Activated CD8-positive, alpha-beta T cell treated with anti-CD3 and anti-CD28 coated beads for 36 hours (primary cell): ENCODE measurements at regions of chr22 and their contacts with region 1.

Region 1: GRCh38 chr22:22463855-22464540 is 44.5 kb downstream of the ZNF280B start:
- DNase-seq: peak; percentile 67
- ATAC-seq: no peak
- H3K4me3 Mint-ChIP-seq: no peak overlapping the region
- H3K27ac Mint-ChIP-seq: no peak overlapping the region
- H3K4me1 Mint-ChIP-seq: no peaks in the 10 kb centered on the region
- H3K27me3 Mint-ChIP-seq: peaks cover 37% of the 10 kb centered on the region
- CTCF ChIP-seq: peak; percentile 92

Region 2: DNA sequence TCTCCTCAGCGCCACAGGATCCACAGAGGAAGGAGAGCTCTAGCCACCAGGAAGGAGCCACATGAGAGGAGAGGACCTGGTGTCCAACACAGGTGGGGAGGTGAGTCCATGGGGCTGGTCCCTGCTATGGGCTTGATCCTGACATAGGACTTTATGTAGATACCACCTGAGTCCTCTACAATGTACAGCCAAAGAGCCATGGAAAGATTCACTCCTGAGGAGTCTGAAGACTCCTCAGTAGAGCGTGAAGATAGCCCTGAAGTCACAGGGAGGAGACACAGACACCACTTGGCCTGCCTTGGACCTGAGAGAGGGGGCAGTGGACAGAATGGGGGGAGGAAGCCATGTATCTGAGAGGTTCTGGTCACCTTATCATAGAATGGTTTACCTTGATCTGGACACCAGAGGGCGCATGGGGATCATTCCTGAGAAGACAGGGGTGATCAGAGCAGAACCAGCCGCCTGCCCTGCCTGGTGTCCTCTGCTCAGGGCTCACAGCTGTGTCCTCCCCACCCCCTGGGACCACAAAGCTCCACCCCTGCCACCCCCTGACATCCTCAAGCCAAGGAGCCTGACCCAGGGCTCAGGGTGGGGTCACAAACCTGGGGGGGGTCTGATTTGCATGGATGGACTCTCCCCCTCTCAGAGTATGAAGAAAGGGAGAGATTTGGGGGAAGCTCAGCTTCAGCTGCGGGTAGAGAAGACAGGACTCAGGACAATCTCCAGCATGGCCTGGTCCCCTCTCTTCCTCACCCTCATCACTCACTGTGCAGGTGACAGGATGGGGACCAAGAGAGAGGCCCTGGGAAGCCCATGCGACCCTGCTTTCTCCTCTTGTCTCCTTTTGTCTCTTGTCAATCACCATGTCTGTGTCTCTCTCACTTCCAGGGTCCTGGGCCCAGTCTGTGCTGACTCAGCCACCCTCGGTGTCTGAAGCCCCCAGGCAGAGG is 32.5 kb before region 1 on chr22:
- CTCF ChIA-PET with region 1: interaction called, 21 read pairs
- POLR2A ChIA-PET with region 1: no interaction called
- intact Hi-C with region 1: no loop called
- DNase-seq: peak; percentile 79
- ATAC-seq: peak; percentile 94
- H3K4me3 Mint-ChIP-seq: no peak overlapping the region
- H3K27ac Mint-ChIP-seq: no peak overlapping the region
- H3K4me1 Mint-ChIP-seq: no peaks in the 10 kb centered on the region
- H3K27me3 Mint-ChIP-seq: peaks cover 14% of the 10 kb centered on the region
- CTCF ChIP-seq: peak; percentile 62

Region 3: DNA sequence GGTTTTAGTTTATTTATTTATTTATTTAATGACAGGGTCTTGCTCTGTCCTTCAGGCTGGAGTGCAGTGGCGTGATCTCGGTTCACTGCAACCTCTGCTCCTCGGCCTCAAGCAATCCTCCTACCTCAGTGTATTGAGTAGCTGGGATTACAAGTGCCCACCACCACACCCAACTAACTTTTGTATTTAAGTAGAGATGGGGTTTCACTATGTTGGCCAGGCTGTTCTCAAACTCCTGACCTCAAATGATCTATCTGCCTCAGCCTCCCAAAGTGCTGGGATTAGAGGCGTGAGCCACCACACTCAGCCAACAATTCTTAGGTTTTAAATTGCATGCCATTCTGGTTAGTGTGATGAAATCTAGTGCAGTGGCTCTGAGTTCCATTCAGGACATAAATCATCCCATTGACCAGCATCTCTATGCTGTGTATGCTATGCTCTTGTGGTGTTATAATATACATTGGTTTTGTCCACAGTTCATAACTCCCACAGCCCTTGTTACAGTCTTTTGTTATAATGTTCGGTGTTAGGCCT is 16.1 kb after region 1 on chr22:
- CTCF ChIA-PET with region 1: interaction called, 27 read pairs
- POLR2A ChIA-PET with region 1: no interaction called
- intact Hi-C with region 1: no loop called
- DNase-seq: no peak
- ATAC-seq: no peak
- H3K4me3 Mint-ChIP-seq: no peak overlapping the region
- H3K27ac Mint-ChIP-seq: no peak overlapping the region
- H3K4me1 Mint-ChIP-seq: no peaks in the 10 kb centered on the region
- H3K27me3 Mint-ChIP-seq: no peaks in the 10 kb centered on the region
- CTCF ChIP-seq: no peak

Region 4: DNA sequence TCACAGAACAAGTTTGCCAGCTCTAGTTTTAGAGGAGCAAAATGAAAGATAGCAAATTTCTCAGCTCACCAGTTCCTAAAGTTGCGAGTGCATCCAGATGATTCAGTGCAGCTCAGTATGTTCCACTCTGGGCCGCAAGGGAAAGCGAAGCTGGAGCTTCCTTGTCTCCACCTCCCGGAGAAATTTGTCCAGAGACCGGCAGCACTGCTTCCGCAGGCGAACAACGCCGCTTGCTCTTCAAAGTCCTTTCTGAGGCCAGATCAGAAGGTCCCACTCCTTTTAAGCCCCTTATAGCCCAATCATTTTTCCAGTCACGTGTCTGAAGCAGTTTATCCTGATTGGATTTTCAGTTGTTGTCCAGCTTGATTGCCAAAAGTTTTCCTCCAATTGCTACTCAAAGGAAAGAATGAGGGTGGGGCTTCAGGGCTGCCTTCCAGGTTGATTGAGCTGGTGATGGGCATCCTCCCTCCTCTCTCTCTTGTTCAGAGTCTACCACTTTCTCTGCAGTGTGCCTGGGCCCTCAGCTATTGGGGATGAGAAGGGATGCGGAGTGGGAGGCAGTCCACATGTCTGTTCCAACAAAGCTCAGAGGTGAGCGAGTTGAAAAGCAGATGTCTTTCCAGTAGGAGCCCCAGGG is 56.1 kb after region 1 on chr22 and contains the start of gene ZNF280A:
- CTCF ChIA-PET with region 1: no interaction called
- POLR2A ChIA-PET with region 1: no interaction called
- intact Hi-C with region 1: no loop called
- DNase-seq: no peak
- ATAC-seq: no peak
- H3K4me3 Mint-ChIP-seq: no peak within 1 kb of the TSS
- H3K27ac Mint-ChIP-seq: no peak within 1 kb of the TSS
- H3K4me1 Mint-ChIP-seq: no peaks in the 10 kb centered on the region
- H3K27me3 Mint-ChIP-seq: peaks cover 20% of the 10 kb centered on the region
- CTCF ChIP-seq: no peak
- total RNA-seq, gene ZNF280A: not detected

Region 5: DNA sequence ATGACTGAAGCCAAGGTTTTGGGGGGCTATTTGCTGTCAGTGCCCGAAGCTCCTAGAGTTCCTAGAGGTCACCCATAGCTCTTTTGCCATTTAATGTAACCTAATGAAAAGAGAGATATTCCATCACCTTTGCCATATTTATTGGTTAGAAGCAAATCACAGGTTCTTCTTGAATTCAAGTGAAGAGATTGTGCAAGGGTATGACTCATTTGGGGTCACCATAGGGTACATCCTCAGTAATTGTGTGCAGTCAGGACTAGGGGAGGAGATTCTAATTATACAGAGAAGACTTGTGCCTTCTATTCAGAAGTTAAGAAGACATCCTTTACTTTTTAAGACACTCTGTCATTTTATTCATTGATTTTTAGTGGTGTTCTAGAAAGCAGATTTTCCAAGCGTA is 102.0 kb after region 1 on chr22:
- CTCF ChIA-PET with region 1: no interaction called
- POLR2A ChIA-PET with region 1: no interaction called
- intact Hi-C with region 1: no loop called
- DNase-seq: no peak
- ATAC-seq: no peak
- H3K4me3 Mint-ChIP-seq: no peak overlapping the region
- H3K27ac Mint-ChIP-seq: no peak overlapping the region
- H3K4me1 Mint-ChIP-seq: no peaks in the 10 kb centered on the region
- H3K27me3 Mint-ChIP-seq: peaks cover 18% of the 10 kb centered on the region
- CTCF ChIP-seq: no peak

Region 6: GRCh38 chr22:22591348-22592299 is 127.6 kb after region 1 on chr22:
- CTCF ChIA-PET with region 1: interaction called, 41 read pairs
- POLR2A ChIA-PET with region 1: no interaction called
- intact Hi-C with region 1: loop called (anchors 10 kb)
- DNase-seq: no peak
- ATAC-seq: no peak
- H3K4me3 Mint-ChIP-seq: no peak overlapping the region
- H3K27ac Mint-ChIP-seq: no peak overlapping the region
- H3K4me1 Mint-ChIP-seq: no peaks in the 10 kb centered on the region
- H3K27me3 Mint-ChIP-seq: peaks cover 7% of the 10 kb centered on the region
- CTCF ChIP-seq: no peak